Right cardiac atrium (tissue), 5 donors: ENCODE measurements at regions of chr1 and their contacts with region 1.

Region 1: DNA sequence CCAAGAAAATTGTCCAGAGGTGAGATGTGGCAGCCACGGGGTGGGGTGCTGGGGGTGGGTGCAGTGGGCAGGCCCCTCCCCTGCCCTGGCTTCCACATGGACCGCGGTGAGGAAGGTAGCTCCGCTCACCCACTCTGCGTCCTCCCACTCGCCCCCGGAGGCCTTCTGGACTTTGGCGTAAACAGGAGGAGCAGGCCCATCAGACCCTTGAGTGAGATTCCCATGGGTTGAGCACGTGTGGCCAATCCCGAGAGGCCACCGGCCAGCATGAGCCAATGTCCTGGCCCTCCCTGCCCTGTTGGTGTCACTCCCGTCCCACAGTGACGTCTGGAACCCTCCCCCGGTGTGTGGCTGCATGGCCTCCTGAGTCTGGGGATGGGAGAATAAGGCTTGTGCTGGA is 8.2 kb upstream of the TMEM240 start:
- DNase-seq: peak in 1 of 3 donors; percentile 54
- ATAC-seq: no peak
- H3K4me3 ChIP-seq: no peak overlapping the region
- H3K27ac ChIP-seq: no peak overlapping the region
- H3K4me1 ChIP-seq: peaks cover 3% of the 10 kb centered on the region
- H3K27me3 ChIP-seq: no peaks in the 10 kb centered on the region

Region 2: GRCh38 chr1:1574721-1575537 is 26.3 kb after region 1 on chr1 and contains the start of gene SSU72:
- intact Hi-C with region 1: loop called in 1 of 4 experiments (anchors 2 kb)
- DNase-seq: peak; percentile 94 to 98 (median 97)
- ATAC-seq: peak; percentile 94 to 95
- H3K4me3 ChIP-seq: peak within 1 kb of the TSS; percentile 74
- H3K27ac ChIP-seq: peak within 1 kb of the TSS; percentile 94
- H3K4me1 ChIP-seq: peaks cover 2% of the 10 kb centered on the region
- H3K27me3 ChIP-seq: no peaks in the 10 kb centered on the region
- total RNA-seq, gene SSU72: 112 to 115 (median 113) TPM

Region 3: DNA sequence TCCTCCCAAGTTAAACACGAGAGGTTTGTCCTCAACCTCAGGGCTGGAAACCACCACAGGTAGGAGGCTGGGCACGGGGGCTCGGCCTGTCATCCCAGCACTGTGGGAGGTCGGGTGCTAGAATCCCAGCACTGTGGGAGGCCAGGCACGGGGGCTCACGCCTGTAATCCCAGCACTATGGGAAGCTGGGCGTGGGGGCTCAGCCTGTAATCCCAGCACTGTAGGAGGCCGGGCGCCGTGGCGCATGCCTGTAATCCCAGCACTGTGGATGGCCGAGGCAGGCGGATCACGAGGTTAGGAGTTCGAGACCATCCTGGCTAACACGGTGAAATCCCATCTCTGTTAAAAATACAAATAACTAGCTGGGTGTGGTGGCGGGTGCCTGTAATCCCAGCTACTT is 182.3 kb after region 1 on chr1:
- intact Hi-C with region 1: no loop called
- DNase-seq: peak in 1 of 3 donors; percentile 32
- ATAC-seq: peak in 1 of 2 donors; percentile 6
- H3K4me3 ChIP-seq: no peak overlapping the region
- H3K27ac ChIP-seq: no peak overlapping the region
- H3K4me1 ChIP-seq: no peaks in the 10 kb centered on the region
- H3K27me3 ChIP-seq: no peaks in the 10 kb centered on the region

Region 4: DNA sequence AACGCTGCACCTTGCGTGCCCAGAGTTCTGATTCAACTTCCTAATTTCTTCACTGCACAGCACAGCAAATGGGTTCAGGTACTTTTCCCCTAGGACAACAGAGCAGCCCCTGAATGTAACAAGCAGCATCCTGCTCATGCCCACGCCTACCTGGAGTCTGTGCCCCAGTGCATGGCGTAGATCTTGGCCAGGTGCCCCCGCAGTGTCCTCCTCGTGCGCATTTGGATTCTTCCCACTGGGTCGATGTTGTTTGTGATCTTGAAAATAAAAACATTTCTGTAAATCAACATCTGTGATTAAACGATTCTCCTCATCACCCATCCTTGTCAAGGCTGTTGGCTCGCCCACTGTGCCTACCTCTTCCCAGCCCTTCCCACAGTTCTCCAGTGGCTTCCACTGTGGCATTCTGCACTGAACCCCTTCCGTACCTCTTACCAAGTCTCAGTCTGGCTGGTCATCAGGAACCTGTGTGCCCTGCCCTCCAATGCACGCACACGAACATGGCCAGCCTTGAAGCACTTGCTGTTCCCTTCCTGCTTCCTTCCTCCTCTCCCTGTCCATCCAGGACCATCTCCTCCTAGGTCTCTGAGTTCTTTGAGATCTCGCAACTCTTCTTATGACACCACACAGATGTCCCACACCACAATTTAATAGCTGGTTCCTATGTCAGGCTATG is 267.2 kb after region 1 on chr1:
- intact Hi-C with region 1: no loop called
- DNase-seq: no peak
- ATAC-seq: no peak
- H3K4me3 ChIP-seq: no peak overlapping the region
- H3K27ac ChIP-seq: no peak overlapping the region
- H3K4me1 ChIP-seq: no peaks in the 10 kb centered on the region
- H3K27me3 ChIP-seq: no peaks in the 10 kb centered on the region

Region 5: DNA sequence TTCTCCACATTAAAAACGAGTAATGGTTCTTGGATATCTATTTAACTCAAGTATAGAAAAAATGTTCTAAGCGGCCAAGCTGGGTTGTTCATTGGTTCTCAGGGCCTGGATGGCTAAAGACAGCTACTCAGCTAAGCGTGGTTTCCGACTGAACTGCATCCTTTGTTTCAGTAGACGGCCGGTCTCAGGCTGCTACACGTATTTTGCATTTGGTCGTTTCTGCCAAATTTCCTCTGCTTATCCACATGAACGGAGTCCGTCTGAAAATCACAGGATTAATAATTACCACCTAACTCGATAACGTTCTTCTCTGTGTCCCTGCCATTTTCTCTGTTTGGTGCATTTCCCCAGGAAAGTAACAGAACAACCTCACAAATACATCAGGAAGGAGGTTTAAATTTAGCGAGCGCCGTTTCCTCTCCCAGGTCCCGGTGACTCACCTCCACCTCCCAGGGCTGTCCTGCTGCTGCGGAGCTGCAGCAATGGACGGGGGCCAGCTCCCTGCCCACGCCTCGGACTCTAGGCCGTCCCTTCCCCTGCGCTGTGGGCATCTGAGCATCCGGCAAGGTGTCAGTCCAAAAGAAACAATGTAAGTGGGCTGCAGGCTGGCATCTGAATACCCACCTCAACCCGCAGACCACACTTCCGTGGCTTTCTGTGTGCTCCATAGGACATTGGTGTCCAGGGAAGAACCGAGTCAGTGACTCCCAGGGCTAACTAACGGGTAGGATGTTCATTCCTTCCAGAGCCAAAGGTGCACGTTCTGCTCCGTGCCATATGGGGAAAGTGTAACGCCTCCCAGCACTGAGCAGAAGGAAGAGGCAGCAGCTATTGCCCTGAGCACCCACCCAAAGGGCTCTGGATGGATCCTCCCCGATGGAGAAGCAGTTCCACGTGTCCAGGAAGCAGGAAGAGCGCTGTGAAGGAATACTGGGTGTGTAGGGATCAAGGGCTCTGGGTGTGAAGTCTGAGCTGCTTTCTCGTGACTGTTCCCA is 466.4 kb after region 1 on chr1:
- intact Hi-C with region 1: no loop called
- DNase-seq: no peak
- ATAC-seq: no peak
- H3K4me3 ChIP-seq: no peak overlapping the region
- H3K27ac ChIP-seq: no peak overlapping the region
- H3K4me1 ChIP-seq: no peaks in the 10 kb centered on the region
- H3K27me3 ChIP-seq: no peaks in the 10 kb centered on the region